ENCODE measurements at regions of chr6 and their contacts with region 1.

Region 1: GRCh38 chr6:156579564-156579963 is 197.6 kb upstream of the ARID1B start:
- DNase-seq: no peak
- ATAC-seq: no peak
- H3K4me3 ChIP-seq: no peak overlapping the region
- H3K27ac ChIP-seq: no peak overlapping the region
- H3K4me1 ChIP-seq: no peaks in the 10 kb centered on the region
- H3K27me3 ChIP-seq: no peaks in the 10 kb centered on the region
- CTCF ChIP-seq: no peak
- POLR2A ChIP-seq: no peak

Region 2: GRCh38 chr6:156674197-156674596 is 94.6 kb after region 1 on chr6:
- intact Hi-C with region 1: loop called (anchors 10 kb)
- DNase-seq: no peak
- ATAC-seq: no peak
- H3K4me3 ChIP-seq: no peak overlapping the region
- H3K27ac ChIP-seq: no peak overlapping the region
- H3K4me1 ChIP-seq: no peaks in the 10 kb centered on the region
- H3K27me3 ChIP-seq: no peaks in the 10 kb centered on the region
- CTCF ChIP-seq: no peak
- POLR2A ChIP-seq: no peak

Measured in body of pancreas (tissue), 4 donors.